ENCODE measurements at regions of chr3 and their contacts with region 1.

Region 1: DNA sequence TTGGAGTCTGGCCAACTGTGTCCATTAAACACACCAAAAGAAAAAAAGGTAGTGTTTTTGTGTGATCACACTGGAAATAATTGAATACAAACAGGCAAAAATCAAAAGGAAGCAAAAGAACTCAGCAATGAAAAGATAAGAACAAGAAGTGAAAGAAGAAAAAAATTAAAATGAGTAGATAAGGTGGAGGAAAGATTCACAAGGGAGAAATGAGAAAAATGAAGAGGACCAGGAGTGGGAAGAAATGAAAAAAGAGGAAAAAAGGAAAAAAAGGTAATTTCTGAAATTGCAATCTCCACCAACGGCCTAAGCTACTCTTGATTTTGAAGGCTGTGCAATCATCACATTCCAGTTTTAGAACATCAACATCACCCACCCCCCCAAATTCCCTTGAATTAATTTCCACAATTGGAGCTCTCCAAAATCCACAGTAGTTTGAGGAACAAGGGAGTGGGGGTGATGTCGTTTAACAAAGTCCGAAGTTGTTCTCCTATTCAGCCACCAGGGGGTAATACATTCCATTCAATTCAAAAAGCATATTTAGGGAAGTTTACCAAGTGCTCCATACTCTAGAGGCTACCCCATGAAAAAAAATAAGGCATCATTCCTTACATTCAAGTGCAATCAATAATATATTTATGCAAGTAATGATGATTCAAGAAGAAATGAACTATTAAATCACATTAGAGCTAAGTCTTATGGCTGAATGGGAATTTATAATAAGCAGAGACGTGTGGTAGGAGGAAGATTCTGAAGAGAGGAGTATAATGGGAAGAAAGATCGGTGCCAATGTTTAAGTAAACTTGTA is 37.4 kb downstream of the ZNF860 start:
- DNase-seq: no peak
- ATAC-seq: peak; percentile 66; the same call in 1 of the 2 replicates
- H3K4me3 ChIP-seq: no peak overlapping the region
- H3K27ac ChIP-seq: peak overlapping the region; percentile 61; the same call in 1 of the 2 replicates
- H3K4me1 ChIP-seq: no peaks in the 10 kb centered on the region; the same call in 1 of the 2 replicates
- H3K27me3 ChIP-seq: no peaks in the 10 kb centered on the region
- CTCF ChIP-seq: peak; percentile 68

Region 2: DNA sequence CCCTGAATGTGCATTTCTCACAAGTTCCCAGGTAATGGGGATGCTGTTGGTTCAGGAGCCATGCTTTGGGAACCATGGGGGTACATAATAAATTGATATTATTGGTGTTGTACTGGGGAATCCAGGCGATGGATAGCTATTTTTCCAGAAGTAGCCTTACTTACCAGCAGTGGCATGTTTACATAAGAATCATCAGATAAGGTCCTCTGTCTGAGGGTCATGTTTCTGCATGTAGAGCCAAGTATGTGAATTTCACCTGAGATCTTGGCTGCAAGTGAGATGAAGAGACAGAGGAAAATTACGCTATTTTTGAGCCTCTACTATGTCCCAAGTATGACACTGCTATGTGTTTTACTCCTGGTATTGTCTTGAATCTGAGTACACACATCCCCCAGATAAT is 113.7 kb after region 1 on chr3:
- CTCF ChIA-PET with region 1: no interaction called
- POLR2A ChIA-PET with region 1: no interaction called
- in situ Hi-C with region 1: no loop called
- intact Hi-C with region 1: no loop called
- DNase-seq: no peak
- ATAC-seq: no peak
- H3K4me3 ChIP-seq: no peak overlapping the region
- H3K27ac ChIP-seq: no peak overlapping the region
- H3K4me1 ChIP-seq: no peaks in the 10 kb centered on the region
- H3K27me3 ChIP-seq: no peaks in the 10 kb centered on the region
- CTCF ChIP-seq: no peak

Region 3: DNA sequence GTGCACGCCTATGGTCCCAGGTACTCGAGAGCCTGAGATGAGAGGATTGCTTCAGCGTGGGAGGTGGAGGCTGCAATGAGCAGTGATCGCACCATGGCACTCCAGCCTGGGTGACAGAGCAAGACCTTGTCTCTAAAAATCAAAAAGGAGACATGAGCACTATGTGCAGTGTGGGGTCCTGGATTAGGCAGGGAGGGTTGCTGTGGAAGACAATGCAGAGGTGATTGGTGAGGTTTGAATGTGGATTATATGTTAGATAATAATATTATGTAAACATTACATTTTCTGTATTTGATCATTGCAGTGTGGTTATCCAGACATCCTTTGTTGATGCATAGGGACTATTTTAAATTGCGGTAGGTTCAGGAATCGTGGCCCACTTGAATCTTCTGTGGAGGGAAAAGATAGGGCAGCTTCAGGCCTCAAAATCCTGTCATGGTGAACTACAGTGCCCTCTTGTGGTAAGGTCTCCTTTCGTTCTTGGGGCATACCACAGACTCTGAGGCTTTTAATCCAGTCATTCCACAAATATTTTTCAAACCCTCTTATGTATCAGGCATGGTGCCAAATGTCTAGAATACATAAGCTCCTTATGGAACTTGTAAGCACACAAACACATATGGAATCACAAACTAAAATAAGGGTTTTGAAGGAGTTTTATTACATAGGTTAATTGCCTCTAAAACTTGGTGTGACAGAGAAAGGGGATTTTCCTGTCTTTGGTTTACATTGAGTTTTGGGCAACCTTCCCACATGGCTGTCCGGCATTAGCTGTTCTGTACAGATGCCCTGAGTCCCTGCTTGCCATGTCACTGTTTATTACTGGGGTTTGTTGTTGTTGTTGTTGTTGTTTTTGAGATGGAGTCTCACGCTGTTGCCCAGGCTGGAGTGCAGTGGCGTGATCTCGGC is 125.1 kb after region 1 on chr3:
- CTCF ChIA-PET with region 1: interaction called, 3 read pairs
- POLR2A ChIA-PET with region 1: no interaction called
- in situ Hi-C with region 1: no loop called
- intact Hi-C with region 1: loop called (anchors 2 kb)
- DNase-seq: peak; percentile 57
- ATAC-seq: peak; percentile 88
- H3K4me3 ChIP-seq: no peak overlapping the region
- H3K27ac ChIP-seq: 0 out of 2 replicates have a peak overlapping the region, but pooled peaks have one; percentile 29
- H3K4me1 ChIP-seq: no peaks in the 10 kb centered on the region
- H3K27me3 ChIP-seq: no peaks in the 10 kb centered on the region
- CTCF ChIP-seq: peak; percentile 77